Endothelial cell of umbilical vein (primary cell): ENCODE measurements at regions of chr4 and their contacts with region 1.

Region 1: GRCh38 chr4:83259586-83259985 is 25.0 kb downstream of the COQ2 start:
- DNase-seq: no peak
- H3K4me3 ChIP-seq: no peak overlapping the region
- H3K27ac ChIP-seq: no peak overlapping the region
- H3K4me1 ChIP-seq: peaks cover 39% of the 10 kb centered on the region
- H3K27me3 ChIP-seq: no peaks in the 10 kb centered on the region
- CTCF ChIP-seq: no peak
- POLR2A ChIP-seq: no peak

Region 2: DNA sequence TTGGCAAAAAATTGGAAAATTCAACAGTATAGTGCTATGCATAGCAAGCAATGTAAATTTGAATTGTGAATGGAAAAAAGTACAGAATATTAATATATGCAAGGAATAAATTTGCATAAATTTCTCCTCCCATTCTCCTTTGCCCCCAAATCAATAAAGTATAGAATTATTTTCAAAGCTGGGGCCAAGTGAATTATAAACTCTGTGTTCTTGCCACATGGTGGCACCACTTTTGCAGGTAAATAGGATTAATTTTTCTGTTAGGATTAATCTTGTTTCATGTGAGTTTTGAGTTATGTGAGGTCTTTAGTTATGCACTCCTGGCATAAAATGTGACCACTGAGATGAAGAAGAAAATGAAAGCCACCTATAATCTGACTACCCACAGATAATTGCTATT is 204.7 kb before region 1 on chr4:
- CTCF ChIA-PET with region 1: interaction called, 125 read pairs
- POLR2A ChIA-PET with region 1: no interaction called
- dilution Hi-C with region 1: no loop called
- intact Hi-C with region 1: loop called (anchors 1 kb)
- DNase-seq: peak; percentile 40
- H3K4me3 ChIP-seq: no peak overlapping the region
- H3K27ac ChIP-seq: no peak overlapping the region
- H3K4me1 ChIP-seq: no peaks in the 10 kb centered on the region
- H3K27me3 ChIP-seq: no peaks in the 10 kb centered on the region
- CTCF ChIP-seq: peak; percentile 11 to 17
- POLR2A ChIP-seq: no peak

Region 3: GRCh38 chr4:83062739-83063138 is 196.8 kb before region 1 on chr4:
- CTCF ChIA-PET with region 1: interaction called, 125 read pairs
- POLR2A ChIA-PET with region 1: no interaction called
- dilution Hi-C with region 1: no loop called
- intact Hi-C with region 1: no loop called
- DNase-seq: no peak
- H3K4me3 ChIP-seq: no peak overlapping the region
- H3K27ac ChIP-seq: no peak overlapping the region
- H3K4me1 ChIP-seq: no peaks in the 10 kb centered on the region
- H3K27me3 ChIP-seq: no peaks in the 10 kb centered on the region
- CTCF ChIP-seq: no peak
- POLR2A ChIP-seq: no peak

Region 4: GRCh38 chr4:83074086-83074704 is 185.4 kb before region 1 on chr4:
- CTCF ChIA-PET with region 1: interaction called, 120 read pairs
- POLR2A ChIA-PET with region 1: interaction called, 5 read pairs
- dilution Hi-C with region 1: no loop called
- intact Hi-C with region 1: loop called (anchors 1 kb)
- DNase-seq: peak; percentile 72
- H3K4me3 ChIP-seq: no peak overlapping the region
- H3K27ac ChIP-seq: no peak overlapping the region
- H3K4me1 ChIP-seq: peaks cover 28% of the 10 kb centered on the region
- H3K27me3 ChIP-seq: no peaks in the 10 kb centered on the region
- CTCF ChIP-seq: peak; percentile 59 to 63
- POLR2A ChIP-seq: no peak

Region 5: GRCh38 chr4:83110223-83110945 is 149.2 kb before region 1 on chr4:
- CTCF ChIA-PET with region 1: interaction called, 24 read pairs
- POLR2A ChIA-PET with region 1: no interaction called
- dilution Hi-C with region 1: no loop called
- intact Hi-C with region 1: no loop called
- DNase-seq: peak; percentile 86
- H3K4me3 ChIP-seq: peak overlapping the region; percentile 48 to 78 (median 70)
- H3K27ac ChIP-seq: peak overlapping the region; percentile 71
- H3K4me1 ChIP-seq: peaks cover 13% of the 10 kb centered on the region
- H3K27me3 ChIP-seq: no peaks in the 10 kb centered on the region
- CTCF ChIP-seq: peak; percentile 72 to 87
- POLR2A ChIP-seq: peak; percentile 31

Region 6: GRCh38 chr4:83272900-83273299 is 13.3 kb after region 1 on chr4:
- CTCF ChIA-PET with region 1: interaction called, 18 read pairs
- POLR2A ChIA-PET with region 1: no interaction called
- dilution Hi-C with region 1: no loop called
- intact Hi-C with region 1: no loop called
- DNase-seq: no peak
- H3K4me3 ChIP-seq: no peak overlapping the region
- H3K27ac ChIP-seq: no peak overlapping the region
- H3K4me1 ChIP-seq: no peaks in the 10 kb centered on the region
- H3K27me3 ChIP-seq: no peaks in the 10 kb centered on the region
- CTCF ChIP-seq: no peak
- POLR2A ChIP-seq: no peak

Region 7: DNA sequence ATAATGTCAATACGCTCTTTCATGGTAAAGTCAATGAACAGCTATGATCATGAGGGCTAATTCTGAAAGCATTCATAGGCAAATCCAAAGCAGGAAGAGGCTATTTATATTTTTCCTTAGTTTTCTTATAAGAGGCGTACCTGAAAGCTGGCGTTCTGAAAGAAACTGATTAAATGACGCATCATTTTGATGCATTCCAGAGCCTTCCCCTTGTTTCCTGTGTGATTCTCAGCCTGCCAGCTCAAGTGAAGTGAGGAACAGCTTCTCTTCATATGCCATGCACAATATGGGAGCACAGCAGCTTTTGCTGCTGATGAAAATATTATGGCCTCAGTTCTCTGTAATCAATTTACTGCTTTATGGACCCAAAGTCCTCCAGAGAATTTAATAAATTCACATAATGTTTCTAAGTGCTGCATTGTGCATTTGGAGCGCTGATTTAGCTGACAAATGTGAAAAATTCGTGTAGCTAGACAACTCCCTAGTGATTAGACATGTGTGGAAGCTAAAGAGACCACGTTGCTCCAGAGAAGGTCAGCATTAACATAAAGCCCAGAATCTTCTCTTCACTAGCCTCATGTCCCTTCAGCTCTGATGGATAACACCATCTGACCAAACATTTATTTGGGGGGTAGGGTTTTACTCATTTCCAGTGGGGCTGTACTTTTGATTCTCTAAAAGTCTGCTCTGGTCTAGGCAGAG is 387.1 kb after region 1 on chr4:
- CTCF ChIA-PET with region 1: no interaction called
- POLR2A ChIA-PET with region 1: no interaction called
- dilution Hi-C with region 1: no loop called
- intact Hi-C with region 1: no loop called
- DNase-seq: no peak
- H3K4me3 ChIP-seq: no peak overlapping the region
- H3K27ac ChIP-seq: no peak overlapping the region
- H3K4me1 ChIP-seq: no peaks in the 10 kb centered on the region
- H3K27me3 ChIP-seq: peaks cover 9 to 19% of the 10 kb centered on the region in 2 experiments
- CTCF ChIP-seq: no peak
- POLR2A ChIP-seq: no peak